Activated naive CD4-positive, alpha-beta T cell treated with anti-CD3 and anti-CD28 coated beads, Interleukin-2, amount 10 ng/mL, durations not matched to agents 7 days and 5 days (primary cell): ENCODE measurements at regions of chr1 and their contacts with region 1.

Region 1: GRCh38 chr1:37859507-37860345 is at the start of gene MTF1:
- DNase-seq: peak; percentile 98
- H3K4me3 Mint-ChIP-seq: peak within 1 kb of the TSS; percentile 93
- H3K27ac Mint-ChIP-seq: peak within 1 kb of the TSS; percentile 96
- H3K4me1 Mint-ChIP-seq: peaks cover 35% of the 10 kb centered on the region
- H3K27me3 Mint-ChIP-seq: no peaks in the 10 kb centered on the region

Region 2: DNA sequence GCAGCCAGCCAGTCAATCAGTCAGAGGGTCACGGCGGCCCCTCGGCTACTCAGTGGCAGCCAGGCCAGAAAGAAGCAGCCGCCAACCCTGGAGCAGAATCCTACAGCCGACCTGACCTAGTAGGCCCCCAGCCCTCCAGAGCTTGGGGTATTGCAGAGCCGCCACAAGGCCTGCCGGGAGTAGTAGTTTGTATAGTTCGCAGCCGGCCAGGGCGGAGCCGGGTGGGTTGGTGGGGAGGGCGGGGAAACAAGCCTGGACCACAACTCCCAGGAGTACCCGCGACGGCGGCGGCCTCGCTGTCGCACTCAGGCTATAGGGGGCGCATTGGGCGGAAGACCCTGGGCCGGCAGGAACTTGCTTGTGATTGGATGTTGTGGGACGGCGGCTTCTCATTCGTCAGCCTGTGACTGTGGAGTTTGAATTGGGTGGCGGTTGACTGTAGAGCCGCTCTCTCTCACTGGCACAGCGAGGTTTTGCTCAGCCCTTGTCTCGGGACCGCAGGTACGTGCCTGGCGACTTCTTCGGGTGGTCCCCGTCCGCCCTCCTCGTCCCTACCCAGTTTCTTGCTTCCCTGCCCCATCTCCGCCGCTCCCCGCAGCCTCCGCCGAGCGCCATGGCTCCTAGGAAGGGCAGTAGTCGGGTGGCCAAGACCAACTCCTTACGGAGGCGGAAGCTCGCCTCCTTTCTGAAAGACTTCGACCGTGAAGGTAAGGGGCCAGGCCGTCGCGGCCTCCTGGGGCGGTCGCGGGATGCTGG is 167.5 kb before region 1 on chr1 and contains the start of gene CDCA8:
- CTCF ChIA-PET with region 1: interaction called, 10 read pairs
- DNase-seq: peak; percentile 99
- H3K4me3 Mint-ChIP-seq: peak within 1 kb of the TSS; percentile 94
- H3K27ac Mint-ChIP-seq: peak within 1 kb of the TSS; percentile 92
- H3K4me1 Mint-ChIP-seq: peaks cover 56% of the 10 kb centered on the region
- H3K27me3 Mint-ChIP-seq: no peaks in the 10 kb centered on the region

Region 3: GRCh38 chr1:37807555-37808368 is 52.0 kb before region 1 on chr1 and contains the starts of genes C1orf122 and YRDC:
- CTCF ChIA-PET with region 1: interaction called, 18 read pairs
- DNase-seq: peak; percentile 96
- H3K4me3 Mint-ChIP-seq: peak within 1 kb of the TSS; percentile 97
- H3K27ac Mint-ChIP-seq: peak within 1 kb of the TSS; percentile 96
- H3K4me1 Mint-ChIP-seq: peaks cover 34% of the 10 kb centered on the region
- H3K27me3 Mint-ChIP-seq: no peaks in the 10 kb centered on the region

Region 4: DNA sequence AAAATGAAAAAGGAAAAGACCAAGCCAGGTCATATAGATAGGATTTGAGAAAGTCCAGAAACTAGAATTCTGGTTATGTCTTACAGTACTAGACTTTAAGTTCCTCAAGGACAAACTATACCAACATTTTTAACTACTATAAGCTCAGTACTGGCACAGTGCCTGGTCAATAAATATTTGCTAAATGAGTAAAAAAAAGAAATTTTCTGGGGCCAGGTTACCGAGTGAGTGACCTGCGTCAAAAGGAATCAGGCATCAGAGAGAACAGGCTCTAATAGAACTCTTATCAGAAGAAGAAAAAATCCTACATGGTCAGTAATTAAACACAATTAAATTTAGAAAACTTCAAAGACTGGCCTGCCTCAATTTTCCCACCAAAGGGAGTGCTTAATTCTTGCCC is 27.9 kb before region 1 on chr1:
- CTCF ChIA-PET with region 1: interaction called, 10 read pairs
- DNase-seq: no peak
- H3K4me3 Mint-ChIP-seq: no peak overlapping the region
- H3K27ac Mint-ChIP-seq: no peak overlapping the region
- H3K4me1 Mint-ChIP-seq: peaks cover 1% of the 10 kb centered on the region
- H3K27me3 Mint-ChIP-seq: no peaks in the 10 kb centered on the region